ENCODE measurements at regions of chr14 and their contacts with region 1.

Region 1: DNA sequence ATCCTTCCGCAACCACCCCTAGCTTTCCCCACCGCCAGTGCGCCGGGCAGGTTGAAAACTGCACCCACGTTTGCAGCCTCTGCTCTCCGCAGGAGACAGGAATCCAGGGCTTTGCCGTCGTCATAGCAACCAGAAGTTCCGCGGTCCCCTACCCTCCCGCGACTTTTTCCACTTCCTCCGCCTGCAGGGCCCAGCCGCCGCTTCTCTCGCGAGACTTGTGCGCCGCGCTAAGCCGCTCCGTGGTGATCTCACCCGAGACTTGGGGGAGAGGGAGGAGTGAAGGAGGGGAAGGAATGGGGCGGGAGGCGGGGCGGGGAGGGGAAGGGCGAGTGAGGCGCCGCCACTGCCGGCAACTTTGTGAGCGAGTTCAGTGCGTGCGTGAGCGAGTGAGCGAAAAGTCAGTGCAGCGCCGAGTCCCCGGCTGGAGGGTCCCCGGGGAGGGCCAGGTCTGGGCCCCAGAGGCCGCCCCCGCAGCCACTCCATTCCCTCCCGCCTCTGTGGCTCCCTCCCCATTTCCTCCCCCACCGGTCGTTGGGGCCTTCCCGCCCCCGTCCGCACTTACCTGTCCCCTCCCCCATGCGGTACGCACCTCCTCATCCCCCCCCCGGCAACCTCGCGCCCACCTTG is 413.0 kb downstream of the PCNX1 start:
- DNase-seq: peak; percentile 99
- ATAC-seq: peak; percentile 79
- H3K4me3 ChIP-seq: peak within 1 kb of the TSS; percentile 78
- H3K27ac ChIP-seq: peak within 1 kb of the TSS; percentile 90
- H3K4me1 ChIP-seq: peaks cover 26% of the 10 kb centered on the region
- H3K27me3 ChIP-seq: no peaks in the 10 kb centered on the region
- CTCF ChIP-seq: no peak

Region 2: DNA sequence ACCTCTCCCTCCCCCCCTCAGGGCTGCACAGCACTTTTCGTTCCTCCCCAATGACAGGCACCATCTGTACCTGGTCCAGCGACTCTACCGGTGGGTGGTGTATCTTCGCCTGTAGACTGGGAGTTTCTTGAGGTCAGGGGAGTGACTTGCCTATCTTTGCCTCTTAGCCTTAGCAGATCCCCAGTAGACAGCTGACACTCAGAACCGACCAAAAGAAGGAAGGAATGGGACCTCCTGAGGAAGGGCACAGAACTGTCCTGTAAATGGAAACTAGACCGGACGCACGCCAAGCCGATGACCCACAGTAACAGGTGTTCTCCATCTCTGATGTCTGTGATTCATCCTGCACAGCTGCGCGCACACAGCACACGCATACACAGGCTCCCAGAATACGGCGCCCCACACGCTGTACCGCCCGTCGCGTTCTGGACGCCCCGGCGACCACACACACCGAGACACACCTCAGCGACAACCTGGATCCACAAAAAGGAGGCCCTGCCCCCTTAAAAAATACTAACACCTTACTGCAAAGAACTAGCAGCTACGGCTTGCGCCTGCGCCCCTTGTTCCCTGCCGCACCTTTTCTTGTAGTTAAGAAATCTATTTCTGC is 679.2 kb before region 1 on chr14:
- CTCF ChIA-PET with region 1: no interaction called
- POLR2A ChIA-PET with region 1: no interaction called
- intact Hi-C with region 1: no loop called
- DNase-seq: peak; percentile 69
- ATAC-seq: peak; percentile 78
- H3K4me3 ChIP-seq: peak overlapping the region; percentile 85
- H3K27ac ChIP-seq: no peak overlapping the region
- H3K4me1 ChIP-seq: peaks cover 17% of the 10 kb centered on the region; the same call in 1 of the 2 replicates
- H3K27me3 ChIP-seq: peaks cover 30% of the 10 kb centered on the region
- CTCF ChIP-seq: no peak

Region 3: GRCh38 chr14:71138448-71139293 is 181.5 kb before region 1 on chr14:
- CTCF ChIA-PET with region 1: interaction called, 7 read pairs
- POLR2A ChIA-PET with region 1: interaction called, 3 read pairs
- intact Hi-C with region 1: loop called (anchors 1 kb)
- DNase-seq: peak; percentile 80
- ATAC-seq: peak; percentile 27
- H3K4me3 ChIP-seq: 0 out of 2 replicates have a peak overlapping the region, but pooled peaks have one; percentile 10
- H3K27ac ChIP-seq: peak overlapping the region; percentile 15; the same call in 1 of the 2 replicates
- H3K4me1 ChIP-seq: peaks cover 33% of the 10 kb centered on the region
- H3K27me3 ChIP-seq: no peaks in the 10 kb centered on the region
- CTCF ChIP-seq: peak; percentile 99

Region 4: GRCh38 chr14:71338153-71338552 is 17.9 kb after region 1 on chr14:
- CTCF ChIA-PET with region 1: no interaction called
- POLR2A ChIA-PET with region 1: no interaction called
- intact Hi-C with region 1: no loop called
- DNase-seq: no peak
- ATAC-seq: no peak
- H3K4me3 ChIP-seq: no peak overlapping the region
- H3K27ac ChIP-seq: no peak overlapping the region
- H3K4me1 ChIP-seq: no peaks in the 10 kb centered on the region
- H3K27me3 ChIP-seq: no peaks in the 10 kb centered on the region
- CTCF ChIP-seq: no peak

Region 5: DNA sequence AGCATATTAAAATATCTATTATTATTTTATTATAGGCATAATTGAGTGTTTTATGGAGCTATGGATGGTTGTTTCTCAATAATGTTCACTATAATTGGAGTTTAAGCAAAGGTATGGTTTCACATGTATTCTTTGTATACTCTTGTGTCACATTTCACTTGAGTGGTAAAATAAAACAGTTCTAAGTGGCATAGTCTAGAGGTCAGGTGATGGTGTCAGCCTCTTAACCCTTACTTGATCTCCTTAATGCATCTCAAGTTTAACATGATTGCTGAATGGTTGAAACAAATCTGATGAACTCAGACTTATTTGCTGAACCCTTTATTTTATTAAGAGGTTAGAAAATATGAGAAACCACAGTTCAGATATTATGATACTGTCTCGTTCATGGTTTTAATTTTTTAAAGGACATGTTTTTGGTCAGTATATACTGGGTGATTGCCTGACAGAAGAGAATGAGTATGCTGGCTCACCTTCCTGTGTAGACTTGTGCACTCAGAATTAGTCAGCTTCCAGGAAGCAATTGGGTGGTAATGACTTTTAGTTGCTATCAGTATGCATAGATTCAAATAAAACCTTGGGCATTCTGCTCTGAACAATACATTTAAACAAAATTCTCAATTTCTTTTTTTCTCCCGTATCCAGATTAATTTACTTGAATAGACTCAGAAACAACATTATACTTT is 51.6 kb after region 1 on chr14:
- CTCF ChIA-PET with region 1: no interaction called
- POLR2A ChIA-PET with region 1: no interaction called
- intact Hi-C with region 1: loop called (anchors 2 kb)
- DNase-seq: peak; percentile 78
- ATAC-seq: peak; percentile 98
- H3K4me3 ChIP-seq: peak overlapping the region; percentile 51
- H3K27ac ChIP-seq: peak overlapping the region; percentile 89
- H3K4me1 ChIP-seq: peaks cover 30% of the 10 kb centered on the region
- H3K27me3 ChIP-seq: no peaks in the 10 kb centered on the region
- CTCF ChIP-seq: no peak

Region 6: GRCh38 chr14:71452987-71453386 is 132.8 kb after region 1 on chr14:
- CTCF ChIA-PET with region 1: interaction called, 7 read pairs
- POLR2A ChIA-PET with region 1: no interaction called
- intact Hi-C with region 1: loop called (anchors 1 kb)
- DNase-seq: no peak
- ATAC-seq: no peak
- H3K4me3 ChIP-seq: no peak overlapping the region
- H3K27ac ChIP-seq: no peak overlapping the region
- H3K4me1 ChIP-seq: peaks cover 65% of the 10 kb centered on the region
- H3K27me3 ChIP-seq: no peaks in the 10 kb centered on the region
- CTCF ChIP-seq: no peak

Region 7: GRCh38 chr14:71591929-71592328 is 271.7 kb after region 1 on chr14:
- CTCF ChIA-PET with region 1: no interaction called
- POLR2A ChIA-PET with region 1: no interaction called
- intact Hi-C with region 1: loop called (anchors 5 kb)
- DNase-seq: peak; percentile 66
- ATAC-seq: peak; percentile 95
- H3K4me3 ChIP-seq: no peak overlapping the region
- H3K27ac ChIP-seq: 0 out of 2 replicates have a peak overlapping the region, but pooled peaks have one; percentile 0
- H3K4me1 ChIP-seq: peaks cover 15% of the 10 kb centered on the region
- H3K27me3 ChIP-seq: no peaks in the 10 kb centered on the region
- CTCF ChIP-seq: no peak

Region 8: DNA sequence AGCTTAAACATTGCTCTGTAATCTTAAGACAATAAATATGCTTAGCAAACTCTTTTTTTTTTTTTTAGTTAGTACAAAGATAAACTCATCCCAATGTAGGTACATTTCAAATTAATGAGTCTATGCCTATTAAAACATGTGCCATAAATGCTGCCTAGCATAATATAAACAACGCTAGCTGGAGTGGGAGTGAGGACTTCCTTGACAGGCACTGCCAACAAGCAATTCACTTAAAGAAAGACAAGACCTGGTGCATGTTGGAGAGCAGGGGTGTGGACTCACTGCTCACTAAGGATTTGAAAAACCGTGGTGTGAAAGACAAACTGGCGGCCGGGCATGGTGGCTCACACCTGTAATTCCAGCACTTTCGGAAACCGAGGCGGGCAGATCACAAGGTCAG is 424.9 kb after region 1 on chr14:
- CTCF ChIA-PET with region 1: no interaction called
- POLR2A ChIA-PET with region 1: no interaction called
- intact Hi-C with region 1: loop called (anchors 2 kb)
- DNase-seq: no peak
- ATAC-seq: peak; percentile 69
- H3K4me3 ChIP-seq: no peak overlapping the region
- H3K27ac ChIP-seq: no peak overlapping the region
- H3K4me1 ChIP-seq: no peaks in the 10 kb centered on the region; the same call in 1 of the 2 replicates
- H3K27me3 ChIP-seq: no peaks in the 10 kb centered on the region
- CTCF ChIP-seq: no peak

Measured in PC-3 (cell line).